Panc1 (cell line): ENCODE measurements at regions of chr20 and their contacts with region 1.

Region 1: GRCh38 chr20:47886460-47887041 is 101.3 kb upstream of the SULF2 start:
- DNase-seq: no peak
- ATAC-seq: no peak
- H3K4me3 ChIP-seq: no peak overlapping the region
- H3K27ac ChIP-seq: no peak overlapping the region
- H3K4me1 ChIP-seq: no peaks in the 10 kb centered on the region
- H3K27me3 ChIP-seq: peaks cover 6% of the 10 kb centered on the region; the same call in 1 of the 2 replicates
- CTCF ChIP-seq: no peak

Region 2: DNA sequence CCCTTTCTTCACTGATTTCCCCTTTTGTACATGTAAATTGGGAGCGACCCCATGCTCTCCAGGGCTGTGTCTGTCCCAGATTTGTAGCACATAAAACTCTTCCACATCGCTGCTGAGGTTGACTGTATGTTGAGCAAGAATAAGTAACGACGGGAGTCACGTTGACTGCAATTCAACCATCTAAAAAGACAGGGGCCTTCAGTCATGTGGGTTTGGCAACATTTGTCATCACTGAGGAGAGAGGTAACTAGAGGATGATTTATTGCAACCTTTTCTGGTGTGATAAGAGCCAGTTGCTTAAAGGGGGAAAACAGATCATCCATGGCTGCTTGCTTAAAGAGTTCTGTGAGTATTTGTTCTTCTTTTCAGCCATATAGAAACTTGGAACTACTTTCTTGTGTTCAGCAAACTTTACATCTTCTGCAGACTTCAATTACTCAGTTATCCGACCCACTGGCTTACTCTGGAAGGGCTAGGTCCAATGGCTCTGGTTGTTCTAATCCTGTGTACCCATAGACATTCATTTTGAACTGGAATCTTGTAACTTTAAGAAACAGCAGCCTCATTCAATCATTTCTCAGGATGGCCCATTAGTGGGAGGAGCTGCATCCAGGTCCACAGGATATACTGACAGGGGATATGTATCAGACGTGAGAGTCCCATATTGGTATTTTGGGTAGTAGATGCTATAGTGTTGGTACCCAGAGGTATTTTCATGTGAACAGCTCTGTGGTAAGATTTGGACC is 58.3 kb after region 1 on chr20:
- CTCF ChIA-PET with region 1: no interaction called
- POLR2A ChIA-PET with region 1: no interaction called
- in situ Hi-C with region 1: no loop called
- intact Hi-C with region 1: no loop called
- DNase-seq: no peak
- ATAC-seq: no peak
- H3K4me3 ChIP-seq: no peak overlapping the region
- H3K27ac ChIP-seq: no peak overlapping the region
- H3K4me1 ChIP-seq: no peaks in the 10 kb centered on the region
- H3K27me3 ChIP-seq: 0 out of 2 replicates have a peak, but pooled peaks cover 2% of the 10 kb centered on the region
- CTCF ChIP-seq: no peak

Region 3: GRCh38 chr20:48523212-48523941 is 636.8 kb after region 1 on chr20:
- CTCF ChIA-PET with region 1: no interaction called
- POLR2A ChIA-PET with region 1: no interaction called
- in situ Hi-C with region 1: no loop called
- intact Hi-C with region 1: loop called (anchors 5 kb)
- DNase-seq: peak; percentile 10
- ATAC-seq: 0 out of 2 replicates have a peak, but pooled peaks have one; percentile 62
- H3K4me3 ChIP-seq: no peak overlapping the region
- H3K27ac ChIP-seq: no peak overlapping the region
- H3K4me1 ChIP-seq: no peaks in the 10 kb centered on the region
- H3K27me3 ChIP-seq: peaks cover 10% of the 10 kb centered on the region
- CTCF ChIP-seq: no peak